Posterior vena cava (tissue), 2 donors: ENCODE measurements at regions of chr15 and their contacts with region 1.

Region 1: GRCh38 chr15:95326431-95327182 is 1003.9 kb upstream of the NR2F2 start:
- DNase-seq: peak; percentile 83

Region 2: DNA sequence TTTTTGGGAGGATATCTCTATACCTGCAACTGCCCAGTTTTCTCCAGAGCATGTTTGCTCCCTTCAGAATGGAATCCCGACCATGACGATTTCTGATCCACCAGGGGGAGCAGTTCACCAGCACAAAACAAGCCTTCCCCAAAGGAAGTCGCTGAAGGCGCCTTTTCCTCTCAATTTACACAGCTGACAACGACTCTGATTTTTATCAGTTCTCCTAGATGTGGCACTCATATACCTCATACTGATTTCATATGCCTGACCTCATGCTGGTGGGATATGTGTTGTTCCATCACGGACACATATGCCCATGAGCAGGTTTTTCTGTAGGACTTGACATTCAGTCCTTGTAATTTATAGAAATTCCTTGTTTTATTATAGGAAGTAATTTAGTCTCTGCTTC is 67.1 kb before region 1 on chr15:
- intact Hi-C with region 1: loop called in 1 of 2 experiments (anchors 5 kb)
- DNase-seq: peak; percentile 83

Region 3: GRCh38 chr15:95409626-95410310 is 83.2 kb after region 1 on chr15:
- intact Hi-C with region 1: loop called in 1 of 2 experiments (anchors 10 kb)
- DNase-seq: no peak

Region 4: DNA sequence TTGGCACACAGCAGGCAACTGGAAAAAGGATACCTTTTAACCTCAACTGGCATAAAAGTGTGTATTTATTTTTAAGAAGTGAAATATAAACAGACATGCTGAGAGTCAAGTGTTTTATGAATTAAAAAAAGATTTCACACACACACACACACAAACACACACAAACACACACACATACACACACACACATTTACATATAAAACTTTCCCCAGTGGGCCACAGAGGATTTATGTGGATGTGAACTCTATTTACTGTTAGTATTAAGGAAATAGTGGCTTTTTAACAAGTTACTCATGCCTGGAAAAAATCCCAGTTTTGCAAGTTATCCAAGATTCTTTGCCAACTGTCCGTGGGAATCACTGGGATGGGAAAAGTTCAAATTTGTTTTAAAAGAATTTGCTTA is 278.0 kb after region 1 on chr15:
- intact Hi-C with region 1: loop called in 1 of 2 experiments (anchors 5 kb)
- DNase-seq: no peak

Region 5: DNA sequence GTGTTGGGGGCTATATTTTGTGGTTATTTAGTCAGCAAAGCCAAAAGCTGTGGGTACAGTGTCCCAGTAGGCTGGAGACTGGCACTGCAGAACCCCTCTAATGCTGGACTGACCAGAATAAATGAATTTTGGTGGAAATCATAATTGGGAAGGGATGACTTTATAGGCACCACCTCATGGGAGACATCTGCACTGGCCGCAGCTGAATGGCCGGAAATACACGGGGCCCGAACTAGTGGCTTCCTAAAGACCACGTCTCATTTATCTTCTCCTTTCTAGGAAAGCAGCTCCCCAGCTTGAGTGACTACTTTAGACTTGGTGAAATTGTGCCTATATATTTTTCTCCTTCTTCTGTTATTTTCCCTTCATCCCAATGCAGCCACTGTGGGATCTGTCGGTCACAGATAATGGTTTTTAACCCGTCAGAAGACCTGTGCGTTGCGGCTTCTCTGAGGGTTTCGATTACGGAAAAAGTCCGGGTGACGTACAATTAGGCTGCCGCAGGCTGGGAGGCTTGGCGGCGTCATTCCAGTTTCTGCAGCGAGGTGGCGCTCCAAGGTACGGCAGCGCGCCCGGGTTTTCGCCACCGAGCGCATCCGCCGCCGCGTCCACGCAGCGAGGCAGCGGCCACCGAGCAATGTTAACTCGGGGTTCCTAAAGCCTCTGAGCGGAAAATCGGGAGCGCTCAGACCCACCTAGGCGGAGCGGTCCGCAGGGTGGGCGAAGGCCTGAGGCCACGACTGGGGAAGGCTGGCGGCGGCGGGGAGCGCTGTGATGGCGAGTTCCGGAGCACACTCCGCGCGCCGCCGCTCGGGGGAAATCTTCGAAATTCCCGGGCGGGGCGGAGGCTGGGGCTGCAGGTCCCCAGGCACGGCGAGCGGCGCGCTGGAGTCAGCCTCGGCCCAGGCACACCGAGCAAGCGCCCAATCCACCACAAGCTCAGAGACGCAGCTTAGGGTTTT is 1030.2 kb after region 1 on chr15:
- intact Hi-C with region 1: loop called in 1 of 2 experiments (anchors 1 kb)
- DNase-seq: peak; percentile 93